Panc1 (cell line): ENCODE measurements at regions of chr15 and their contacts with region 1.

Region 1: GRCh38 chr15:51837792-51838251 is 8.4 kb downstream of the TMOD3 start:
- DNase-seq: no peak
- ATAC-seq: peak; percentile 60
- H3K4me3 ChIP-seq: peak overlapping the region in 1 of 2 experiments; percentile 3; a peak in 1 of 4 replicates
- H3K27ac ChIP-seq: peak overlapping the region; percentile 49
- H3K4me1 ChIP-seq: peaks cover 38% of the 10 kb centered on the region
- H3K27me3 ChIP-seq: no peaks in the 10 kb centered on the region
- CTCF ChIP-seq: no peak

Region 2: GRCh38 chr15:51768018-51768417 is 69.8 kb before region 1 on chr15:
- CTCF ChIA-PET with region 1: no interaction called
- POLR2A ChIA-PET with region 1: no interaction called
- in situ Hi-C with region 1: no loop called
- intact Hi-C with region 1: no loop called
- DNase-seq: no peak
- ATAC-seq: no peak
- H3K4me3 ChIP-seq: no peak overlapping the region
- H3K27ac ChIP-seq: no peak overlapping the region
- H3K4me1 ChIP-seq: no peaks in the 10 kb centered on the region
- H3K27me3 ChIP-seq: no peaks in the 10 kb centered on the region
- CTCF ChIP-seq: no peak

Region 3: DNA sequence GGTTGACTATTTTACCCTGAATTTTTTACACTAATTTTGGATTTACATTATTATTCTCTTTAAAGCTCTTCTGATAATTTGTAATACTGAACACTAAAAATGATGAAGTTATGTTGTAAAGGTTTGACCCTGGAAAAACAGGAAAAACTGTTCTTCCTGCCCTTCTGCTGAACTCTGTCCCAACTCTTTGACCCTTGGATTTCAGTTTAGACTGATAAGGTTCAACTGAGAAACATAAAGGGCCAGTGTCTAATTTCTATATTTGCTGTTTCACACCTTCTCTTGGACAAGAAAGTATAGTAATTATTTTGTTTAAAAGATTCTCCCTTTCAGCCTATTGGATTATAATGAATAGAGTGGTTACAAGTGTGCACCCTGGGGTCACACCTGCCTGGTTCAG is 21.2 kb before region 1 on chr15:
- CTCF ChIA-PET with region 1: no interaction called
- POLR2A ChIA-PET with region 1: no interaction called
- in situ Hi-C with region 1: no loop called
- intact Hi-C with region 1: no loop called
- DNase-seq: no peak
- ATAC-seq: no peak
- H3K4me3 ChIP-seq: no peak overlapping the region
- H3K27ac ChIP-seq: no peak overlapping the region
- H3K4me1 ChIP-seq: no peaks in the 10 kb centered on the region
- H3K27me3 ChIP-seq: no peaks in the 10 kb centered on the region
- CTCF ChIP-seq: no peak

Region 4: DNA sequence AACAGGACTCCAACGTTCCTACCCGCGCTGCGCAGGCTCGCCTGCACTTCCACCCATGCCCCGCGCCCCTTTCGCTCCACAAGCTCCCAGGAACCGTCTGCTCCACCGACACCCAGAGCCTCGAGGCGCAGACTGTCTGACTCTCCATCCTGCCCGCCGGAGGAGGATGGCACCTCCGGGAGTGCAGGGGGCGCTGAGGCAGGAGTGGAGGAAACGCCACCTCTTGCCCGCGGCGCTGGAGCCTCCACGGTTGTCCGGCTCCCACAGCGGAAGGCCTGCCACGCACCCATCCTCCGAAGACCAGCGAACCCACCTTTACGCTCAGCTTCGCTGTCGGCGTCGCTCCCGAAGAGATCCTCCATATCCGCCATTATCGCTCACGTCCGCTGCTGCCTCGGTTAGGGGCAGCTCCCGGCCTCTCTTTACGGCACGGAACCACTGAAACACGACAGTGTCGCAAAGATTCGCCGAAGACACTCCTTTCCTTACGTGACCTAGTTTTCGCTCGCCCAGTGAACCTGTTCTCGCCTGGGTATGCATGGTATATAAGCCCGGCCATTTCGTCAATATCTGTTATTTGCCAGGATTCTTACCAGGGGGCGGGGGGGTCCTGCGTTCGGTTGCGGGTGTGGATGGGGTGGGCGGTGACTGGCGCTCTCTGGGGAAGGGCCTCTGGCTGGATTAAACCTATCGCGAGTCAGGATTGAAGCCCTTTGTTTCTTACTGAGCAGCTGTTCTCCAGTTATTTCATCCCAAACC is 133.7 kb after region 1 on chr15 and contains the start of gene LEO1:
- CTCF ChIA-PET with region 1: no interaction called
- POLR2A ChIA-PET with region 1: interaction called, 14 read pairs
- in situ Hi-C with region 1: no loop called
- intact Hi-C with region 1: no loop called
- DNase-seq: peak; percentile 86
- ATAC-seq: peak; percentile 92
- H3K4me3 ChIP-seq: peak within 1 kb of the TSS; percentile 82 to 95
- H3K27ac ChIP-seq: peak within 1 kb of the TSS; percentile 84
- H3K4me1 ChIP-seq: peaks cover 11% of the 10 kb centered on the region
- H3K27me3 ChIP-seq: no peaks in the 10 kb centered on the region
- CTCF ChIP-seq: no peak
- total RNA-seq, gene LEO1: 30.1 TPM